WTC11 (cell line): ENCODE measurements at regions of chr5 and their contacts with region 1.

Region 1: DNA sequence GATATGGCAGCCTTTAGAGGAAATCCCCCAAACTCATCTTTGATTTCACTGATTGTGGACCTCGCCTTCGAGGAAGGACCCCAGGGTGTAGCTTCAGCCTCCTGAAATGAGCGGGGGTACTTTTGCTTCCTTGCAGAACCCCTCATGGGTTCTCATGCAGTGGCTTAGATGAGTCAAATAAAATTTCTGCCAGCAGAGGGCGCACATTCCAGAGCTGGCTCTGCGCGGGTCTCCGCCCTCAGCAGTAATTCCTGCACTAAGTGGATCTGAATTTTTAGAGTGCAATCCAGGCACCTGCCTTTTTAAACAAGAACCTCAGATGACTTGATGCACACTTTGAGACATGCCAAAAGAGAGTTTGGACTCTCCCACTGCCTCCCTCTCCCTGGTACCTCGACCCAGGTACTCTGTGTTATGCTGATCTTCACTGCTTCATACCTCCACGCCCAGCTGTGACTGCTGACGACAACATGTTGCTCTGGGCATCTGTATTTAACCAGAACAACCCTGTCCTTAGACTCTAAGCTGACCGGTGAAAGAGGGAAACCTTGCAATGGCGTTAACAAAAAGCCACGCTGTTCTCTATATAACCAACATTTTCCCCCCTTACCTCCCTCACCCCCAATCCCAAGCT is 7.3 kb downstream of the EGFLAM start:
- DNase-seq: peak; percentile 84
- ATAC-seq: peak; percentile 98
- H3K4me3 Mint-ChIP-seq: peak overlapping the region; percentile 40
- H3K27ac Mint-ChIP-seq: no peak overlapping the region
- H3K4me1 Mint-ChIP-seq: 0 out of 2 replicates have a peak, but pooled peaks cover 4% of the 10 kb centered on the region
- H3K27me3 Mint-ChIP-seq: peaks cover 42% of the 10 kb centered on the region
- CTCF ChIP-seq: peak; percentile 73

Region 2: DNA sequence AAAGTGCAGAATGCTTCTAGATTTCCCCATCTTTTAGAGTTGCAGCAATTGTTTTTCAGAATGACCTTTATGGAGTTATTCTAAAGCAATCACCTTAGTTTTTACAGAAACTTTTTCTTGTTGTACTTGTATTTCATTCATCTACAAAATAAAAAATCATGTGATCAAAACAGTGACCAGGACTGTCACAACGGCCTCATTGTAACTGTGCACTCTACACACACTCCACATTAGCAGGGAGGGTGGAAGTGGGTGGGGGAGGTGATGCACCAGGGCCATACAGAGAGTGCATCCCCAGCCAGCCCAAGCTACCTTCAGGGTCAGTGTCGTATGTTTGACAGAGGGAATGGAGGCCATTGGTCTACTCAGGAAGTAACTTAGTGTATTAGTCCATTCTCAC is 19.6 kb after region 1 on chr5:
- CTCF ChIA-PET with region 1: interaction called, 17 read pairs
- POLR2A ChIA-PET with region 1: no interaction called
- DNase-seq: no peak
- ATAC-seq: no peak
- H3K4me3 Mint-ChIP-seq: no peak overlapping the region
- H3K27ac Mint-ChIP-seq: no peak overlapping the region
- H3K4me1 Mint-ChIP-seq: peaks cover 14% of the 10 kb centered on the region
- H3K27me3 Mint-ChIP-seq: peaks cover 3% of the 10 kb centered on the region
- CTCF ChIP-seq: no peak